Endothelial cell of umbilical vein (primary cell): ENCODE measurements at regions of chr12 and their contacts with region 1.

Region 1: GRCh38 chr12:41277116-41277945 is 89.2 kb downstream of the PDZRN4 start:
- DNase-seq: peak; percentile 41
- H3K4me3 ChIP-seq: no peak overlapping the region
- H3K27ac ChIP-seq: no peak overlapping the region
- H3K4me1 ChIP-seq: no peaks in the 10 kb centered on the region
- H3K27me3 ChIP-seq: peaks cover 0 to 3% of the 10 kb centered on the region in 2 experiments
- CTCF ChIP-seq: peak; percentile 41 to 46
- POLR2A ChIP-seq: no peak

Region 2: DNA sequence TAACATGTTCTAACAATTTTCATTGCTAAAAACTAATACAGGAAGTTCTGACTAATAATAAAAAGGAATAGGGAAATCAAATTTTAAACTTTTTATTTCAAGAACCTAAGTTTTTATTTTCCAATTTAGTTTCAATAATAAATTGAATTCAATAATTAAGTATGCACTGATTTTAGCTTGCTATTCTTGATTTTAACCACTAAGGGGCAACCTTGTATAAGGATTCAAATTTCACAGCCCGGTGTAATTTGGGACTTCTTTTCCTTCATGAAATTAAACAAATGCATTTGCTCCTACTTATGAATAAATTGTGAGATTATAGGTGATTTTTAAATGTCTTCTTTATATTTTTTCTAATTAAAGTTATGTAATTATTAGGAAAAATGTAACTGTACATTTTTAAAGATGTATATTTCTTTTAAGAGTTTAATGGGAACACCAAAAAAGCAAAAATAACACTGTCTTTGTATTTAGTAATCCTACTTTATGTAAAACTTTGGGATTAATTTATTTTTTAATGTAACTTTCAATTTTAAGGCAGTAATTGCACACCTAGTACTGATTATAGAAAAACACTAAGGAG is 330.6 kb before region 1 on chr12:
- CTCF ChIA-PET with region 1: interaction called, 16 read pairs
- POLR2A ChIA-PET with region 1: no interaction called
- dilution Hi-C with region 1: no loop called
- intact Hi-C with region 1: loop called (anchors 1 kb)
- DNase-seq: peak; percentile 55
- H3K4me3 ChIP-seq: no peak overlapping the region
- H3K27ac ChIP-seq: no peak overlapping the region
- H3K4me1 ChIP-seq: no peaks in the 10 kb centered on the region
- H3K27me3 ChIP-seq: no peaks in the 10 kb centered on the region
- CTCF ChIP-seq: peak in 1 of 2 donors; percentile 41
- POLR2A ChIP-seq: no peak

Region 3: GRCh38 chr12:41521872-41522379 is 244.6 kb after region 1 on chr12:
- CTCF ChIA-PET with region 1: no interaction called
- POLR2A ChIA-PET with region 1: no interaction called
- dilution Hi-C with region 1: no loop called
- intact Hi-C with region 1: loop called (anchors 10 kb)
- DNase-seq: peak; percentile 92
- H3K4me3 ChIP-seq: peak overlapping the region in 2 of 3 experiments; percentile 32 to 62
- H3K27ac ChIP-seq: peak overlapping the region; percentile 89
- H3K4me1 ChIP-seq: peaks cover 19% of the 10 kb centered on the region
- H3K27me3 ChIP-seq: no peaks in the 10 kb centered on the region
- CTCF ChIP-seq: no peak
- POLR2A ChIP-seq: no peak

Region 4: DNA sequence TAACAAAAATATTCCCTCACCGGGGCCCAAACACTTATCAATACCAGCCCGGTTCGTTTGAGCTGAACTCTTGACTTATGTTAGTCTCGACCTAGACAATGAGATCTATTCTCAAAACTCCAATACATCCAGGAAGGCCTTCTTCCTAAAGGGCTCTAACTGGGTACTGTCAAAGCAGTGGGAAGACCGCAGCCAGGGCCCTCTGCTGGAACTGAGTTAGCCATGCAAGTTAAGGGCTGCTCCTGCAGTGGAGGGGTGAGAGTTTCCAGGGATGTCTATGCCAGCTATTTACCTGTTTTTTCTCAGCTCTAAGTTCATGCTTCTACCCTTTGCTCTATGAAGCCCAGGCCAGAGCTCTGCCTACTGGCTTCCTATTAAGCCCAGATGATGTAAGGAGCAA is 518.6 kb after region 1 on chr12:
- CTCF ChIA-PET with region 1: interaction called, 3 read pairs
- POLR2A ChIA-PET with region 1: no interaction called
- dilution Hi-C with region 1: no loop called
- intact Hi-C with region 1: loop called (anchors 2 kb)
- DNase-seq: peak; percentile 5
- H3K4me3 ChIP-seq: no peak overlapping the region
- H3K27ac ChIP-seq: no peak overlapping the region
- H3K4me1 ChIP-seq: peaks cover 19% of the 10 kb centered on the region
- H3K27me3 ChIP-seq: no peaks in the 10 kb centered on the region
- CTCF ChIP-seq: peak; percentile 12 to 17
- POLR2A ChIP-seq: no peak

Region 5: GRCh38 chr12:42104087-42104486 is 826.8 kb after region 1 on chr12:
- CTCF ChIA-PET with region 1: interaction called, 4 read pairs
- POLR2A ChIA-PET with region 1: no interaction called
- dilution Hi-C with region 1: no loop called
- intact Hi-C with region 1: loop called (anchors 2 kb)
- DNase-seq: no peak
- H3K4me3 ChIP-seq: no peak overlapping the region
- H3K27ac ChIP-seq: no peak overlapping the region
- H3K4me1 ChIP-seq: no peaks in the 10 kb centered on the region
- H3K27me3 ChIP-seq: no peaks in the 10 kb centered on the region
- CTCF ChIP-seq: peak in 1 of 2 donors; percentile 5
- POLR2A ChIP-seq: no peak

Region 6: DNA sequence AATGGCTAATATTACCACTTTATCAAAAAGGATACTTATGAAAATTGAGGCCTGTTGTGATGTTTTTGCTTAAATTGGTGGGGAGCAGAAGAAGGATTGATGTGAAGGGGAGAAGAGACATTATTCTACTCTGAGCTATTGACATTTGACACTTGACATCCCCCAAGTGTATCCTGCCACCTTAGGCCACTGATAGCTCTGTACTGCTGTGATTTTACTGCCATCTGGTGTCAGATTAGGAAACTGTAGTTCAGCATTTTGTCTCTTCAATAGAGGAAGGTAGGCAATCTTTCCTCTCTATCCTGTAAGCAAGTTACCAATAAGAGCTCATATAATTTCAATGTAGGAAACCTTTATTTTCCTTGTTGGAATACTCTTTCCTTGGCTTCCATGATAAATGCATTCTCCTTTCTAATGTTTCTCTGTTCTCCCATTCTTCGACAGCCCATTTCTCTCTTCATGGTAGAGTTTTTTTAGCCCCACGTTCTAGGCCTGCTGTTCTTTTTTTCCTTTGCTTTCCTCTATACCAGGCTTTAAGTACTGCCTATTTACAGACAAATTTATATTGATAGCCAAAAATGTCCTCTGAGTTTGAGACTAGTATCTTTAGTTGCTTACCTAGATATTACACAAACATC is 1094.9 kb after region 1 on chr12:
- CTCF ChIA-PET with region 1: interaction called, 8 read pairs
- POLR2A ChIA-PET with region 1: no interaction called
- dilution Hi-C with region 1: no loop called
- intact Hi-C with region 1: loop called (anchors 1 kb)
- DNase-seq: peak; percentile 57
- H3K4me3 ChIP-seq: no peak overlapping the region
- H3K27ac ChIP-seq: no peak overlapping the region
- H3K4me1 ChIP-seq: no peaks in the 10 kb centered on the region
- H3K27me3 ChIP-seq: no peaks in the 10 kb centered on the region
- CTCF ChIP-seq: peak; percentile 53 to 57
- POLR2A ChIP-seq: no peak